Activated B cell treated with CpG ODN at 0.5 μM for 24 hours (primary cell): ENCODE measurements at regions of chr2 and their contacts with region 1.

Region 1: GRCh38 chr2:161238560-161239325 is 69.5 kb upstream of the PSMD14 start:
- DNase-seq: peak; percentile 41
- ATAC-seq: peak; percentile 45
- H3K4me3 Mint-ChIP-seq: peak overlapping the region; percentile 86
- H3K27ac Mint-ChIP-seq: peak overlapping the region; percentile 54
- H3K4me1 Mint-ChIP-seq: peaks cover 55% of the 10 kb centered on the region
- H3K27me3 Mint-ChIP-seq: peaks cover 2% of the 10 kb centered on the region
- CTCF ChIP-seq: no peak

Region 2: DNA sequence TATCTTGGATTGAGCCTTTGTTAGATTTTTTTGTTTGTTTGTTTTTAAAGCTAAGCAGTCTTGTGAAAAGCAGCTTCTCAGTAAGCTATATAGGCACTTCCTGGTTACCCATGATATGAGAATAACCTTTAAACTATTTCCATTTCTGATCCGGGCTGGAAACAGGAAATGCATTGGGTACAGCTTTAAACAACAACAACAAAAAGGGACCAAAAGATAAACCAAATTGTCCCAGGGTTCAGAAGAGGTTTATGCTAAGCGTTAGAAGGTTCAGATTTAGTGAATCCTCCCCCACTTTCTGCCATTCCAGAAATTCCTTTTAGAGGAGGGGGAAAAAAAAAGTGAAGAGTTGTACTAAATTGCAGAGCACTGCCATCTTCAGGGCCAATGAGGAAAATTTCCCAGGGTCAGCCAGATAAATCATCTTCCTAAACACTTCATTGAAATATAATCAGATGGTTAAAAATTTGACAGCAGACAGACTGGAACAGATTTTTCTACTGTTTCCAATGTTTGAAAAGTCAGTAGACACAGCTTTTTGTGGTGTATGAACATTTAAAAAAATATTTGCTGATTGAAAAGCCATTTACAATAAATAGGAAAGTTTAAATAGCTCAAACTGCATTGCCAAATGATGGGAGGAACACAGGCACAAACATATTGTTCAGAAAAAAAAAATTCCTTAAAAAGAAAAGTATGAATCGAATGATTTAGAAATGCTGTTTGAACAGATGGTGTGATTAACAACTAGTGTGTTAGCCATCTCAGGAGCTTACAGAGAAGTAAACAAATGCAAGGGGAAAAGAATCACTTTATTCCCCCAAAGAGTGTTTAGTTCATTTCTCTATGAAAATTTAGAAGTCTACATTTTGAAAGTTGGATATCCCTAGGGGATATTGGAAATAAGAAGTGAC is 268.4 kb before region 1 on chr2:
- CTCF ChIA-PET with region 1: no interaction called
- POLR2A ChIA-PET with region 1: no interaction called
- intact Hi-C with region 1: no loop called
- DNase-seq: no peak
- ATAC-seq: no peak
- H3K4me3 Mint-ChIP-seq: no peak overlapping the region
- H3K27ac Mint-ChIP-seq: no peak overlapping the region
- H3K4me1 Mint-ChIP-seq: peaks cover 2% of the 10 kb centered on the region
- H3K27me3 Mint-ChIP-seq: no peaks in the 10 kb centered on the region
- CTCF ChIP-seq: no peak

Region 3: GRCh38 chr2:161090411-161090810 is 148.3 kb before region 1 on chr2:
- CTCF ChIA-PET with region 1: no interaction called
- POLR2A ChIA-PET with region 1: no interaction called
- intact Hi-C with region 1: no loop called
- DNase-seq: no peak
- ATAC-seq: no peak
- H3K4me3 Mint-ChIP-seq: peak overlapping the region; percentile 76
- H3K27ac Mint-ChIP-seq: peak overlapping the region; percentile 83
- H3K4me1 Mint-ChIP-seq: peaks cover 48% of the 10 kb centered on the region
- H3K27me3 Mint-ChIP-seq: no peaks in the 10 kb centered on the region
- CTCF ChIP-seq: no peak

Region 4: DNA sequence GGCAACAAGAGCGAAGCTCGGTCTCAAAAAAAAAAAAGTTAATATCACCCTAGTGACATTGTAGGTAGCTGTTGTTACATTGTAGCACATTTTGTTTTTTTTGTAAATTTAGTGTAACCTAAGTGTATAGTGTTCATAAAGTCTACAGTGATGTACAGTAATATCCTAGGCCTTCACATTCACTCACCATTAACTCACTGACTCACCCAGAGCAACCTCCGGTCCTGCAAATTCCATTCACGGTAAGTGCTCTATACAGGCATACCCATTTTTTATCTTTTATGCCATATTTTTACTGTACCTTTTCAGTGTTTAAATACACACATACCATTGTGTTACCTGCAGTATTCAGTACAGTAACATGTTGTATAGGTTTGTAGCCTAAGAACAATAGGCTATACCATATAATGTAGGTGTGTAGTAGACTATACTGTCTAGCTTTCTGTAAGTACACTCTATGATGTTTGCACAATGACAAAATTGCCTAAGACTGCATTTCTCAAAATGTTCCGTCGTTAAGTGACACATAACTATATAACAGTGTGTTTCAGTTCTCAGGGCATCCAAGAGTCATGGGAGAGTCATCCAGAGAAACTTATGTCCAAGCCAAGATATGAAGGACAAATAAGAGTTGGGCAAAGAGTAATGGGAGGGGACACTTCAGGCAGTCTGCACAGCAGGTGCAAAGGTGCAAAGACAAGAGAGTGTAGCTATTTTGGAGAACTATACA is 10.1 kb before region 1 on chr2:
- CTCF ChIA-PET with region 1: interaction called, 16 read pairs
- POLR2A ChIA-PET with region 1: interaction called, 3 read pairs
- intact Hi-C with region 1: loop called (anchors 1 kb)
- DNase-seq: no peak
- ATAC-seq: no peak
- H3K4me3 Mint-ChIP-seq: no peak overlapping the region
- H3K27ac Mint-ChIP-seq: no peak overlapping the region
- H3K4me1 Mint-ChIP-seq: no peaks in the 10 kb centered on the region
- H3K27me3 Mint-ChIP-seq: no peaks in the 10 kb centered on the region
- CTCF ChIP-seq: no peak

Region 5: DNA sequence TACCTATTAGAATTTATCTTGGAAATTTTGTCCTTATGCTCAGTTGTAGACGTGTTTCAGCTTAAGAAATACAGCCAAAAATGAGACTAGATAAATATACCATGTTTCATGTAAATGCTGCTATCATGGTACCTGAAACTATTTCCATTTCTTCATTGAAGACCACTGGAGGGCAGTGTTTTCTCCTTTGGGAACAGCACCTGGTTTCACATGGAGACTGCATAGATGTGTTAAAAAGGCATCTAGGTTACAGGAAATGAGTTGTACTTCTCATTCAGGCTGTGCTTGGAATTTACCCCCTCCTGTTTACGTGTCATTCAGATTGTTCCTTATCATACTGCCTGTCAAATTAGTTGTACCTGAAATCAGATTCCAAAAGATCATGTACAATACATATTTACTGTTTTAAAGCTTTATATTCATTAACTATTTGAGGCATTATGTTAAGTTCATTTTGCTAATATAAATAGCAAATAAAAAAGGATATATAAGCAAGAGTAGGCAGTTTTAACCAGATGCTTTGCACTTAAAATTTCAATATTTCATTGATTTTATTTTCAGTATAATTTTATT is 12.2 kb after region 1 on chr2:
- CTCF ChIA-PET with region 1: no interaction called
- POLR2A ChIA-PET with region 1: interaction called, 4 read pairs
- intact Hi-C with region 1: loop called (anchors 2 kb)
- DNase-seq: no peak
- ATAC-seq: no peak
- H3K4me3 Mint-ChIP-seq: no peak overlapping the region
- H3K27ac Mint-ChIP-seq: no peak overlapping the region
- H3K4me1 Mint-ChIP-seq: peaks cover 21% of the 10 kb centered on the region
- H3K27me3 Mint-ChIP-seq: no peaks in the 10 kb centered on the region
- CTCF ChIP-seq: no peak